ENCODE measurements at regions of chr12 and their contacts with region 1.

Region 1: GRCh38 chr12:62435303-62436163 is 31.1 kb upstream of the MON2 start:
- DNase-seq: peak; percentile 83

Region 2: GRCh38 chr12:62799126-62799736 is 363.7 kb after region 1 on chr12:
- in situ Hi-C with region 1: loop called (anchors 25 kb)
- DNase-seq: peak; percentile 82

Measured in ACHN (cell line).